ENCODE measurements at regions of chr10 and their contacts with region 1.

Region 1: DNA sequence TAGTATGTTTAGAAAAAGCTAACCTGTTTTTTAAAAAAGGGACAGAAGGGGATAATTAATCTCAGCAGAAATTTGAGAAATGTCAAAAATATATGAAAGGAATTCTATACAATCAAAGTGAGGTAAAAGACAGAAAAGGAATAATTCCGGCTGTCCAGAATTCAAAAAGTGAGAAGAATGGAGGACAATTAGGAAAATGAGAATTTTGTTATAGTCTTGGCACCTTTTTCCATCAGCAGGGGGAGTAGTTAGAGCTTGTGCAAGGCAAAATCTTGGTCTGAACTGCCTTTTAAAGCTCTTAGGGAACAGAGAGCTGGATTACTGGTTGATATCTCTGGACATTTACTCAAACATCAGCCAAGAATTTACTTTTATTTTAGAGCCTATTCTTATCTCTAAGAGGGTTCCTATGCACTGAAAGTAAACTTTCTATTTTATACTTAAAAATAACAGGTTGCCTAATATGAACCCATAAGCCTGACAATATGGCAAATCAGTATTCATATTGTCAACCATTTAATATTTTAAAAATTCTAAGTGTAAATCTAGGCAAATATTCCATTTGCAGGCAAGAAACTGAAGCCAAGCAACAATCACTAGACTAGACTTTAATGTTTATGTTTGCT is 185.6 kb downstream of the ANK3 start:
- DNase-seq: peak in 1 of 35 experiments; percentile 23
- ATAC-seq: no peak
- H3K4me3 ChIP-seq: no peak overlapping the region
- H3K4me3 Mint-ChIP-seq: no peak overlapping the region
- H3K27ac ChIP-seq: no peak overlapping the region
- H3K27ac Mint-ChIP-seq: no peak overlapping the region
- H3K4me1 ChIP-seq: no peaks in the 10 kb centered on the region
- H3K4me1 Mint-ChIP-seq: peaks cover 0 to 6% (median 1%) of the 10 kb centered on the region in 3 donors
- H3K27me3 ChIP-seq: no peaks in the 10 kb centered on the region
- H3K27me3 Mint-ChIP-seq: no peaks in the 10 kb centered on the region

Region 2: GRCh38 chr10:60182691-60183090 is 21.4 kb before region 1 on chr10:
- CTCF ChIA-PET with region 1: interaction called in 1 of 2 experiments, 10 read pairs
- POLR2A ChIA-PET with region 1: no interaction called
- DNase-seq: no peak
- ATAC-seq: no peak
- H3K4me3 ChIP-seq: no peak overlapping the region
- H3K4me3 Mint-ChIP-seq: no peak overlapping the region
- H3K27ac ChIP-seq: no peak overlapping the region
- H3K27ac Mint-ChIP-seq: no peak overlapping the region
- H3K4me1 ChIP-seq: no peaks in the 10 kb centered on the region
- H3K4me1 Mint-ChIP-seq: peaks cover 0 to 1% (median 0%) of the 10 kb centered on the region in 3 donors
- H3K27me3 ChIP-seq: no peaks in the 10 kb centered on the region
- H3K27me3 Mint-ChIP-seq: no peaks in the 10 kb centered on the region

Region 3: DNA sequence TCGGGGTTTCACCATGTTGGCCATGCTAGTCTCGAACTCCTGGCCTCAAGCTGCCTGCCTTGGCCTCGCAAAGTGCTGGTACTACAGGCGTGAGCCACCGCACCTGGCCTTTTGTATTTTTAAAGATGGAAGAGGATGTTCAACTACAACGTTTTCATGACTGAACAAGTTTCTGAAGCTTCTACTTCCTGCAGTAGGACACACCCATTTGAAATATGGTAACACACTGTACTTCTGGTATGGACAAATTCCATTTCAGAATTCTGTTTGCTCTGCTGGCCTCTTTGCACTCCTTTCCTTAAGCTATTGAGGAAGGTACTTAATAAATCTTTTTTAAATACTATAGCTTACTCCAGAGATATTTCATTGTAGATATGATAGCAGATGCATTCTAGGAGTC is 563.3 kb after region 1 on chr10:
- CTCF ChIA-PET with region 1: interaction called in 1 of 2 experiments, 11 read pairs
- POLR2A ChIA-PET with region 1: no interaction called
- DNase-seq: no peak
- ATAC-seq: no peak
- H3K4me3 ChIP-seq: no peak overlapping the region
- H3K4me3 Mint-ChIP-seq: no peak overlapping the region
- H3K27ac ChIP-seq: no peak overlapping the region
- H3K27ac Mint-ChIP-seq: no peak overlapping the region
- H3K4me1 ChIP-seq: peaks cover 3% of the 10 kb centered on the region in 2 experiments
- H3K4me1 Mint-ChIP-seq: peaks cover 7 to 24% (median 11%) of the 10 kb centered on the region in 3 donors
- H3K27me3 ChIP-seq: no peaks in the 10 kb centered on the region
- H3K27me3 Mint-ChIP-seq: peaks cover 0 to 2% of the 10 kb centered on the region in 2 donors